ENCODE measurements at regions of chr1 and their contacts with region 1.

Region 1: GRCh38 chr1:182143154-182143657 is 81.7 kb upstream of the ZNF648 start:
- DNase-seq: peak; percentile 83 to 93 (median 88)
- ATAC-seq: peak; percentile 92
- H3K4me3 ChIP-seq: no peak overlapping the region
- H3K27ac ChIP-seq: no peak overlapping the region
- H3K4me1 ChIP-seq: peaks cover 12% of the 10 kb centered on the region in 2 experiments
- H3K27me3 ChIP-seq: peaks cover 0 to 4% of the 10 kb centered on the region in 2 experiments; a peak in 2 of 5 replicates
- CTCF ChIP-seq: peak; percentile 97 to 99 (median 98)
- EP300 ChIP-seq: peak; percentile 25; the same call in 1 of the 2 replicates
- POLR2A ChIP-seq: no peak
- RAD21 ChIP-seq: peak; percentile 96 to 100

Region 2: DNA sequence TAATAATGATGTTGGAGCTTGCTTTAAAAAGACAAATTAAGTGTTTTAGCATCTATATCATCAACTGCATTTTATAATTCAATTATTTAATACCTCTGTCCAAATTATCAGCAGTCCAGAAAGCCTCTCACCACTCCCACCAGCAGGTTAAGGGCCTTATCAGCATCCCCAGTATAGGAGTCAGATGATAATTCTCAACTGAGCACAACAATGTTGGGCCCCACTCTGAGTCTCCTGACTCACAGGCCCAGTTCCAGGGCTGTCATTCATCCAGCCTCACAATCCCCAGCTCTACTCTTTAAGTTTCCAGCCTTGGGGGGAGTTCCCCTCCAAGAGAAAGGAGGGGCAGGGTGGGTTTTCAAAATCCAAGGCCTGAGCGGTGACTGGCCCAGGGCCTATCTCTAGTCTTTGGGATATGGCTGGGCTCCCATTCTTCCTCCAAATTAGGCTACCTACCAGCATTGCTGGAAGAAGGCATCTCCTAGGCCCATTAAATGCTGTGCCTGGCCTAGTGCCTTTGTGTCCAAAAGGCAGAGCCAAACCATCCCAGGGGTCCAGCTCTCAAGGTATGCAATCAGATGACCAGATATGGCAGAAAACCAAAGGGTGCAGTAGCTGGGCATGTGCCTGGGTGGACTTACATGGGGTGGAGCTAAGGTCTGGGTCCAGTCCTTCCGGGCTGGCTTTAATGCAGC is 114.3 kb after region 1 on chr1:
- CTCF ChIA-PET with region 1: no interaction called
- POLR2A ChIA-PET with region 1: interaction called, 3 read pairs
- in situ Hi-C with region 1: no loop called
- intact Hi-C with region 1: loop called (anchors 1 kb)
- DNase-seq: peak; percentile 79 to 95 (median 86)
- ATAC-seq: peak; percentile 93
- H3K4me3 ChIP-seq: no peak overlapping the region
- H3K27ac ChIP-seq: peak overlapping the region; percentile 83
- H3K4me1 ChIP-seq: peaks cover 37 to 47% of the 10 kb centered on the region in 2 experiments
- H3K27me3 ChIP-seq: no peaks in the 10 kb centered on the region
- CTCF ChIP-seq: peak in 1 of 3 experiments; percentile 22; a peak in 2 of 6 replicates
- EP300 ChIP-seq: peak; percentile 94
- POLR2A ChIP-seq: no peak
- RAD21 ChIP-seq: peak; percentile 30 to 33; a peak in 3 of 4 replicates

Region 3: DNA sequence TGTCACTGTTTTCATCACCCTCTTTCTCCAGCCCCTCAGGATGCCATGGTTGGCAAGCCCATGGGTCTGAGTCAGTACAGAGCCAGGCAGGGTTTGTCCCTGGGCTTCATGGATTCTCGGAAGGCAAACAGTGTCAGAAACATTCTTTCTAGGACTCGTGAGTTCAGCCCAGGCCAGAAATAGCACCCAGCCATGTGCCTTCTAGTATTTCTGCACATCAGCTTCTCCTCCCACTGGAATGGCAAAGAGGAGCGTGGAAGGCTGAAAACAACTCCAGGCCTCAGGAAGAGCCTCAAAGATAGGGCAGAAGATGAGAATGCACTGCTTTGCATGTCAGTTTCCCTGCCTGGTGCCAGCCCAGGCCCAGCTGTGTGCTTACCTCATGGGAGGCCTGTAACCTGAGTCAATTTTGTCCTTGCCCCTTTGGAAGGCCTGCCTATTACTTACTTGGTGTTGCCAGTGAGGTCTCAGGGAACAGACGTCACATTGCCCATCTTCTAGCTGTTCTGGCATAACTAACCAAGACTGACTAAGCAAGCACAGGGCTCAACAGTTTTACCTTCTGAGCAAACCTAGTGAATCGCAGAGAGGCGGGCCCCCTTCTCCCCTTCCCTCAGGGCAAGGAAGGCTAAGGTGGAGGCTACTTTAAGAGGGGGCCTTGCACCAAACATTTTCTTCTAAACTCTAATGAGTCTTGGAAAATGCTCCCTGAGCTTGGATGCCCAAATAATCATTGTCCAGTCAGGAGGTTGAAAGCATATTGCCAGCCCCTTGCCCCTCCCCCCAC is 205.9 kb after region 1 on chr1:
- CTCF ChIA-PET with region 1: no interaction called
- POLR2A ChIA-PET with region 1: no interaction called
- in situ Hi-C with region 1: no loop called
- intact Hi-C with region 1: no loop called
- DNase-seq: no peak
- ATAC-seq: peak; percentile 25
- H3K4me3 ChIP-seq: no peak overlapping the region
- H3K27ac ChIP-seq: no peak overlapping the region
- H3K4me1 ChIP-seq: peaks cover 5 to 14% of the 10 kb centered on the region in 2 experiments; a peak in 3 of 5 replicates
- H3K27me3 ChIP-seq: no peaks in the 10 kb centered on the region
- CTCF ChIP-seq: no peak
- EP300 ChIP-seq: no peak
- POLR2A ChIP-seq: no peak
- RAD21 ChIP-seq: no peak

Measured in K562 (cell line).